ENCODE measurements at regions of chr15 and their contacts with region 1.

Region 1: GRCh38 chr15:69652751-69653305 is 200.2 kb downstream of the RPLP1 start:
- DNase-seq: no peak
- ATAC-seq: no peak
- H3K4me3 ChIP-seq: no peak overlapping the region
- H3K27ac ChIP-seq: no peak overlapping the region
- H3K4me1 ChIP-seq: no peaks in the 10 kb centered on the region
- H3K27me3 ChIP-seq: no peaks in the 10 kb centered on the region

Region 2: GRCh38 chr15:69604072-69604411 is 48.8 kb before region 1 on chr15:
- intact Hi-C with region 1: loop called in 1 of 4 experiments (anchors 10 kb)
- DNase-seq: no peak
- ATAC-seq: no peak
- H3K4me3 ChIP-seq: no peak overlapping the region
- H3K27ac ChIP-seq: no peak overlapping the region
- H3K4me1 ChIP-seq: peaks cover 10% of the 10 kb centered on the region
- H3K27me3 ChIP-seq: no peaks in the 10 kb centered on the region